Aorta (tissue), 5 donors: ENCODE measurements at regions of chr6 and their contacts with region 1.

Region 1: GRCh38 chr6:150079604-150080003 is 10.7 kb upstream of the ULBP3 start:
- DNase-seq: no peak
- ATAC-seq: no peak
- H3K4me3 ChIP-seq: no peak overlapping the region
- H3K27ac ChIP-seq: no peak overlapping the region
- H3K4me1 ChIP-seq: no peaks in the 10 kb centered on the region
- H3K27me3 ChIP-seq: peaks cover 0 to 1% of the 10 kb centered on the region in 2 donors

Region 2: GRCh38 chr6:150334790-150335783 is 255.5 kb after region 1 on chr6:
- intact Hi-C with region 1: loop called (anchors 2 kb)
- DNase-seq: no peak
- ATAC-seq: no peak
- H3K4me3 ChIP-seq: no peak overlapping the region
- H3K27ac ChIP-seq: no peak overlapping the region
- H3K4me1 ChIP-seq: no peaks in the 10 kb centered on the region
- H3K27me3 ChIP-seq: no peaks in the 10 kb centered on the region

Region 3: GRCh38 chr6:150395398-150396009 is 315.9 kb after region 1 on chr6:
- intact Hi-C with region 1: loop called (anchors 2 to 5 kb)
- DNase-seq: no peak
- ATAC-seq: no peak
- H3K4me3 ChIP-seq: no peak overlapping the region
- H3K27ac ChIP-seq: no peak overlapping the region
- H3K4me1 ChIP-seq: no peaks in the 10 kb centered on the region
- H3K27me3 ChIP-seq: no peaks in the 10 kb centered on the region